Activated T-helper 1 cell treated with anti-CD3 and anti-CD28 coated beads, Interleukin-12 subunit alpha, Interleukin-12 subunit beta, Interleukin-2, Interleukin-4 antibody, amounts not matched to agents 30 ng/mL and 10 ng/mL and 1 ng/mL, durations not matched to agents 14 hours and 24 hours and 36 hours (primary cell): ENCODE measurements at regions of chr1 and their contacts with region 1.

Region 1: GRCh38 chr1:150259758-150260669 is 2.4 kb downstream of the CA14 start:
- DNase-seq: no peak
- H3K4me3 Mint-ChIP-seq: no peak overlapping the region
- H3K27ac Mint-ChIP-seq: no peak overlapping the region
- H3K4me1 Mint-ChIP-seq: peaks cover 19% of the 10 kb centered on the region
- H3K27me3 Mint-ChIP-seq: peaks cover 37% of the 10 kb centered on the region

Region 2: GRCh38 chr1:150109586-150109985 is 150.4 kb before region 1 on chr1:
- intact Hi-C with region 1: no loop called
- DNase-seq: no peak
- H3K4me3 Mint-ChIP-seq: peak overlapping the region; percentile 36
- H3K27ac Mint-ChIP-seq: peak overlapping the region; percentile 62
- H3K4me1 Mint-ChIP-seq: peaks cover 50% of the 10 kb centered on the region
- H3K27me3 Mint-ChIP-seq: no peaks in the 10 kb centered on the region

Region 3: GRCh38 chr1:150221552-150221951 is 38.5 kb before region 1 on chr1:
- intact Hi-C with region 1: no loop called
- DNase-seq: no peak
- H3K4me3 Mint-ChIP-seq: no peak overlapping the region
- H3K27ac Mint-ChIP-seq: no peak overlapping the region
- H3K4me1 Mint-ChIP-seq: peaks cover 5% of the 10 kb centered on the region
- H3K27me3 Mint-ChIP-seq: no peaks in the 10 kb centered on the region

Region 4: GRCh38 chr1:150293433-150294168 is 33.6 kb after region 1 on chr1 and contains the start of gene MRPS21:
- intact Hi-C with region 1: loop called (anchors 1 kb)
- DNase-seq: peak; percentile 85
- H3K4me3 Mint-ChIP-seq: peak within 1 kb of the TSS; percentile 93
- H3K27ac Mint-ChIP-seq: peak within 1 kb of the TSS; percentile 98
- H3K4me1 Mint-ChIP-seq: peaks cover 24% of the 10 kb centered on the region
- H3K27me3 Mint-ChIP-seq: no peaks in the 10 kb centered on the region
- total RNA-seq, gene MRPS21: 81.4 and 85.2 TPM in 2 replicates

Region 5: GRCh38 chr1:150464422-150464826 is 204.4 kb after region 1 on chr1:
- intact Hi-C with region 1: loop called (anchors 5 kb)
- DNase-seq: peak; percentile 50
- H3K4me3 Mint-ChIP-seq: no peak overlapping the region
- H3K27ac Mint-ChIP-seq: peak overlapping the region; percentile 63
- H3K4me1 Mint-ChIP-seq: peaks cover 5% of the 10 kb centered on the region
- H3K27me3 Mint-ChIP-seq: no peaks in the 10 kb centered on the region

Region 6: DNA sequence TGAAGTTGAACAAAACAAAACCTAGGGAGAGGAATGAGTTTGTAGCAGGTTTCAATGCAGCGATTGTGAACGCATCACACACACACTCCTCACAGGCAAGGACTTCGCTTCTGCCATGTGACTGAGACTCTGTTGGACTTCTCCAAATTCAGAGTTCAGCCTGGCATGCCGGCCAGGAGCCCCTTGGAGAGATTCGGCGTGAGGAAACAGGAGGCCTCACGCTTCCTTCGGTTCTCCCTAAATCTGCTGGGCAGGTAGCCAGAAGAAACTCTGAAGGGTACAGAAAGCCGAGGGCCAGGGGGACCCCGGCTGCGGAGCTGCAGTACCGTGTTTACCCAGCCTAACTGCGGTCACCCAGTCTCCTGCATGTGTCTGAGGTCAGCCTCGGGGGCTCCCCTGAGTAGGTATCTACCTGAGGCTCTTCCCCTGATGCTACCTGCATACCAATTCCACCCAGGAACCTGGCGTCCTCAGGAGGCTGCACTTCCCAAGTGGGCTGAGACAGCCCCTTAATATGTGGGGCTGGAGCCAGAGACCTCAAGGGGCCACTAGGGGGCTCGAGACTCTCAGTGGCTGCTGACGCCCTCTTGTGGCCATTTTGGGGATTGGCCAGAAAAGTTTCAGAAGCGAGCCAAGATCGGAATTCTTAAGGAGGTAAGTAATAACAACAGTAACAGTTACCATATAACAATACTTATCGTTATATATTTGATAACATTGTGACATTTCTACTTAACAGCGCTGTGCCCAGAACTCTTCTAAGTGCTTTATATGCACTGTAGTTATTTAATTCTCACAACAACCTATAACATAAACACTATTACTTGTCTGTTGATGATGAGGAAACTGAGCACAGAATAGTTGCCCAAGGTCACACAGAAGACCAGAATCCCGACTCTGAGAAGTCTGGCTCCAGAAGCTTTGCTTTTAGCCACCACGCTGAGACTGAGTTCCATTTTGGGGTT is 719.4 kb after region 1 on chr1:
- intact Hi-C with region 1: loop called (anchors 2 kb)
- DNase-seq: peak; percentile 80
- H3K4me3 Mint-ChIP-seq: no peak overlapping the region
- H3K27ac Mint-ChIP-seq: no peak overlapping the region
- H3K4me1 Mint-ChIP-seq: peaks cover 32% of the 10 kb centered on the region
- H3K27me3 Mint-ChIP-seq: no peaks in the 10 kb centered on the region